Ascending aorta (tissue), 2 donors: ENCODE measurements at regions of chr15 and their contacts with region 1.

Region 1: GRCh38 chr15:92881802-92882696 is 18.1 kb upstream of the CHD2 start:
- DNase-seq: peak; percentile 98 to 100
- H3K4me3 ChIP-seq: peak overlapping the region; percentile 94 to 99
- H3K27ac ChIP-seq: peak overlapping the region; percentile 88 to 100
- H3K4me1 ChIP-seq: peaks cover 0 to 14% of the 10 kb centered on the region in 2 donors
- H3K27me3 ChIP-seq: no peaks in the 10 kb centered on the region
- CTCF ChIP-seq: no peak

Region 2: DNA sequence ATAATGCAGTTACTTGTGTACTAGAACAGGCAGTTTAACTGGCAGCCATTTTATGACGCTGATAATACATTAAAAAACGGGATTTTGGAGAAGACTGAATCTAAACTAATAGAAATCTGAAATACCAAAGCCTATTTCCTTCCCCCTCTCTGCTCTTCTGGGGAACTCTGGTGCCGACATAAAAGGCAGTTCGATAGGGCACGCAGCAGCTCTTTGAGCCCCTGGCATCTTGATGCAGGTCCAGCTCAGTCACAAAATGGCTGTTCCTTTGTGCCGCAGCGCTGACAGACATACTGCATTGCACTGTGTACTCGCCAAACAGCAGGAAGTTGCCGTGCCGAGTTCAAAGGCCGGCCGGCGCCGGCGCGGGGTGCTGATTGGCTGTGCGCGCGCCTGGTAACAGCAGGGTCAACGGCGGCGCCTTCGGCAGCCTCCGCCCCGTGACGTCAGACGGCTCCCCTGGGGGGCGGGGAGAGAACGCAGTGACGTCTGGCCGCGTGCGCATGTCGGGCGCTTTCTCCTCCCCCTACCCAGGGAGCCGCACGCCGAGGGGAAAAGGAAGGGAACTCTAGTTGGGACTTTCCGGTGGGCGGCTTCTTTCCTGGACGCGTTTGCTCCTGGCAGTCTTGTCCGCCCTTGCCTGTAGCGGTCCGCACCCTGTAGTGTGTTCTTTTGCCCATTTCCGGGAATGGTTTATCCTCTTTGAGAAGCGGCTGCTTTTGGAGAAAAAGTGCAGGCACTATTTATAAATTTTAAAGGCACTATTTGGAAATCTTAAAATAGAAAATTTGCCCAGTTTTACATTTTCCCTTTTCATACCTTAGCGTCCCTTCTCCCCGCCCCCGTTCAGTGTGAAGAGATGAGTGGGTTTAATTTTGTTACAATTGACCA is 22.1 kb after region 1 on chr15:
- intact Hi-C with region 1: loop called (anchors 1 kb)
- DNase-seq: peak; percentile 98 to 99
- H3K4me3 ChIP-seq: peak overlapping the region; percentile 71 to 78
- H3K27ac ChIP-seq: peak overlapping the region; percentile 96 to 97
- H3K4me1 ChIP-seq: peaks cover 8 to 39% of the 10 kb centered on the region in 2 donors
- H3K27me3 ChIP-seq: no peaks in the 10 kb centered on the region
- CTCF ChIP-seq: no peak

Region 3: DNA sequence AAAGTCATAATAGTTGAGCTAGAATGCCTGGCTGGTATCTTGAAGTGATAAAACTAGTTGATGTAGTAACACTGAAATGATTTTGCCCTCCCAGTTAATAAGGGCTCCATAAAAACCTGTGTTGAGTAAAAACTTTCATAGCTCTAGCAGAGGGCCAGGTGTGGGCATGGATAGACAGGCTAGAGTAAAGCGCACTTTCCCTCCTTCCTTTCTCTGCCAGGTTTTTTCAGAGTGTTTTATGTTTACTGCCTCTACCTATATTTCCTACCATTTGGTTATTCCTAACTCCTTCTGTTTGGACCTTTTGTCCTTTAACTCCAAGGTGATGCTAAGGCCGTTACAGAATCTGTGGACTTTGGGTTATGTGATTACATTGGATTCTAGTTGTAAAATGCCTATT is 43.4 kb after region 1 on chr15:
- intact Hi-C with region 1: no loop called
- DNase-seq: no peak
- H3K4me3 ChIP-seq: no peak overlapping the region
- H3K27ac ChIP-seq: no peak overlapping the region
- H3K4me1 ChIP-seq: peaks cover 6 to 30% of the 10 kb centered on the region in 2 donors
- H3K27me3 ChIP-seq: no peaks in the 10 kb centered on the region
- CTCF ChIP-seq: no peak